Cardiac septum (tissue), 1 donor: ENCODE measurements at regions of chr1 and their contacts with region 1.

Region 1: GRCh38 chr1:149937060-149937705 is 504 bp upstream of the MTMR11 start:
- DNase-seq: no peak

Region 2: GRCh38 chr1:149887456-149888247 is 49.5 kb before region 1 on chr1:
- intact Hi-C with region 1: loop called (anchors 1 kb)
- DNase-seq: peak; percentile 83

Region 3: GRCh38 chr1:150149271-150150132 is 212.3 kb after region 1 on chr1 and contains the start of gene PLEKHO1:
- intact Hi-C with region 1: no loop called
- DNase-seq: peak; percentile 97
- total RNA-seq, gene PLEKHO1: 88.8 TPM